HEK293 (cell line): ENCODE measurements at regions of chr5 and their contacts with region 1.

Region 1: GRCh38 chr5:43227655-43228054 is 35.6 kb downstream of the NIM1K start:
- H3K4me3 ChIP-seq: no peak overlapping the region
- H3K27ac ChIP-seq: no peak overlapping the region
- H3K4me1 ChIP-seq: no peaks in the 10 kb centered on the region
- CTCF ChIP-seq: no peak

Region 2: DNA sequence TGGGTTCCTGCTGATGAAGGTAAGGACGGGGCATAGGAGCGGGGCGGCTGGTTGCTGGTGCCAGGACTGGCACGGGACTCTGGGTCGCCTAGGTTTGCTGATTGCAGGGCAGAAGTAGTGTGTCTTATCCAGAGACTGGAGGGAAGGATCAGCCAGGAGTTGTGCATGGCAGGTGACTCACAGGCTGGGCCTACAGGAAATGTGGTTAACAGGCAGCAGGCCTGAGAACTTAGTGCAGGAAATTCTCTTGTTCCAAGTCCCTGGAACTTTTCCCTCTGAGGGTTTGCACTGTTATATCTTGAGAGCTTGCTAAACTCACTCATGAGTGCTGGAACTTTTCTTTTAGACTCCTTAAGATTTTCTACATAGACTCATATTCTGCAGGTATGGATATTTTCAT is 282.7 kb before region 1 on chr5:
- CTCF ChIA-PET with region 1: no interaction called
- POLR2A ChIA-PET with region 1: no interaction called
- H3K4me3 ChIP-seq: no peak overlapping the region
- H3K27ac ChIP-seq: no peak overlapping the region
- H3K4me1 ChIP-seq: peaks cover 8% of the 10 kb centered on the region; the same call in 1 of the 2 replicates
- CTCF ChIP-seq: no peak

Region 3: DNA sequence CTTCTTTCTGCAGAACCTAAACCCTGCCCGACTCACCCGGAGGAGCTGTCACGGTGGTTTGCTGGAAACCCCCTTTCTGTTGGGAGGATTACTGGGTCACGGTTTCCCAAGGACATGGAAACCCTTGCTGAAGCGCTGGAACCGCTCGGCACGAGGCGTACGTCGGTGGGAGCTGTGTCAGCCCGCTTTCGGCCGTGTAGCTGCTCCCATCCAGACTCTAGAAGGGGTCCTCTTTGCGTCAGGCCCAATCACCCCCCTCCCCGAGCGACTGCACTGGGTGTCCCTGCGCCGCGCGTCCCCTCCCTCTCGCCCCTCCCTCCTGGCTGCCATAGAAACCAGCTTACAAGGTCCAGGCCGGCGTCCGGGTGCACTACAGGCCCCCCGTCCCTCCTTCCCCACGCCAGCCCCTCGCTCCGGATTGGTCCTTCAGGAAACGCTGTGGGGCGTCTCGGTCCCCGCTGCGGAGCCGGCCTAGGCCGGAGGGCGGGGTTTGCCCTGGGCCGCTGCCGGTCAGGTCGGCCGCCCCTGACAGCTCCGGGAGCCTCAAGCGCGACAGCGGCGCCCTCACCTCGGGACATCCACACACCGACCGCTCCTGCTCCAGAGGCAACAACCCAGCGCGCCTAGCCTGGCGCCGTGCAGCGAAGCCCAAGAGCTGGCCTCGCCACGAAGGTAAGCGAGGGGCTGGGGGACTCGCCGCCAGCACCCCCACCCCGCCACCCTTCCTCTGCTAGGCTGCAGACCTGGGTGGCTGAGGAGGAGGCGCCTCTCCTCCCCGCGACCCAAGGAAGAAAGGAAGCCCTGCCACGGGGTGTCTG is 35.7 kb before region 1 on chr5 and contains the start of gene NIM1K:
- CTCF ChIA-PET with region 1: no interaction called
- POLR2A ChIA-PET with region 1: interaction called, 10 read pairs
- H3K4me3 ChIP-seq: peak within 1 kb of the TSS; percentile 67
- H3K27ac ChIP-seq: no peak within 1 kb of the TSS; the same call in 1 of the 2 replicates
- H3K4me1 ChIP-seq: no peaks in the 10 kb centered on the region; the same call in 1 of the 2 replicates
- CTCF ChIP-seq: 0 out of 2 replicates have a peak, but pooled peaks have one; percentile 6